Left cardiac atrium (tissue), 4 donors: ENCODE measurements at regions of chr5 and their contacts with region 1.

Region 1: DNA sequence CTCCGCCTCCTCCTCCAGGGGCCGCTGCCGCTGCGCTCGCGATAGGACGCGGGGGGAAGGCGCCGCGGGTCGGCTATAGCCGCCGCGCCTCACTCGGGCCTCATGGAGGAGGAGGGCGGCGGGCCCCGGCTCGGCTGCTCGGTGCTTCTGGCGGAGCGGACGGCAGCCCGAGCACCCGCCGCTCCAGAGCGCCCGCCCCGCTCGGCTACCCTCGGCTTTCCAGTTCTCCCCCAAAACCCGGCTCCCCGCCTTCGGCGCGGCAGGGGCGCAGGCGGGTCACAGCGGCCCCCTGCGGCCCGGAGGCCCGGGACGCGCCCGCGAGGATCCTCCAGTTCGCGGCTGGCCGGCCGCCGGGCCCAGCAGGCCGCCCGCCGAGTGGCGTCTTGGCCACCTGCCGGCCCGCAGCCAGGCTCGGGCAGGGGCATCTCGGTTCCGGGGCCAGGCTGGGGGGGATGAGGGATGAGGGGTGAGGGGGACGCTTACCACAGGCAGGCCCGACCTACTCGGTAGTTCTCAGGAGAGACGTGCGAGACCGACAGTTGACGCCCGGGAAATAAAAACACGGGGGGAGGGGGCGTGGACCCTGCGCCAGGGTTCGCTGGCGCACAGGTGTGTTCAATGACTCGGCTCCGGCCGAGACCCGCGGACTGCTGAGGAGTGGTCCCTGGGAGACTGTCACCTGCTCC is at the start of gene PAIP1:
- DNase-seq: peak; percentile 87
- ATAC-seq: peak; percentile 92 to 95
- total RNA-seq, gene PAIP1: 80.6 to 91.8 TPM

Region 2: DNA sequence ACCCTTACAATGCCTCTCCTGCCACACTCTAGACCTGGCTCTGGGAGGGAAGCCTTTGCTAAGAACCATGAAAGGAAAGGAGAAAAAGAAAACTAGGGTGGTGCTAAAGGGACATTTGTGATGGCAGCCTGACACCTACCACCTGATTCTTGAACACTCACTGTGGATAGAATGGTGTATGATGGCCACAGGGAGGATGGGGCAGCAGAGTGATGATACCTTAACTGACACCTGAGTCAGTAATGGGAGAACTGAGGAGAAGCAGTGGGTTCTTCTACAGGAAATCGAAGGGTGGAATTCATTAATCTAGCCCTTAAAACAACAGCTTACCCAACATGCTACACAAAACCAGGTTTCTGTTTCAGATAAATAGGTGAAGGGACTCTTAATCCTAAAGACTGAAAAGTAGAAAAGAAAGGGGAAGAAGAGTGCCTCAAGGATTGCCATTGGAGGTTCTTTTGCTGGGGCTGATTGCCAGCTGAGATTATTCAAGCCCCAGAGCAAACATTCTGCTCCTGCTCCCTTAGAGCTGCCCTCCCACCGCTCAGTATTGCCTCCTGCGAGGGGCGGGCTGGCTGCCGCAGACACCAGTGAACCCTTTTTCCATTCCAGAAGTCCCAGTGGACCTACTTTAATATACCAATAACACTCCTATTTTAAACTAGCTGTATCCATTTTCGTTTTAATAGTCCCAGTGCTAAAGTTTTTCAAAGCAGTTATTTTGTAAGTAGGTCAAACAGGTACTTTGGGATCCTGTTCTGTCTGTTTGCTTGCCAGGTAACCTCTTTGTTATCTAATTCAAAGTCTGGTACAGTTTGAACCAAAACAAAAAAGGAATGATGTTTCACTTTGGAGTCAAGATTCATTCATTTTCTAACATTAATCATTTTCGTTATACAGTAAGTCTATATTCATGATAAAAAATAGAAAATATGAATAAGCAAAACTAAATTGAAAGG is 282.6 kb before region 1 on chr5:
- intact Hi-C with region 1: no loop called
- DNase-seq: no peak
- ATAC-seq: no peak

Region 3: DNA sequence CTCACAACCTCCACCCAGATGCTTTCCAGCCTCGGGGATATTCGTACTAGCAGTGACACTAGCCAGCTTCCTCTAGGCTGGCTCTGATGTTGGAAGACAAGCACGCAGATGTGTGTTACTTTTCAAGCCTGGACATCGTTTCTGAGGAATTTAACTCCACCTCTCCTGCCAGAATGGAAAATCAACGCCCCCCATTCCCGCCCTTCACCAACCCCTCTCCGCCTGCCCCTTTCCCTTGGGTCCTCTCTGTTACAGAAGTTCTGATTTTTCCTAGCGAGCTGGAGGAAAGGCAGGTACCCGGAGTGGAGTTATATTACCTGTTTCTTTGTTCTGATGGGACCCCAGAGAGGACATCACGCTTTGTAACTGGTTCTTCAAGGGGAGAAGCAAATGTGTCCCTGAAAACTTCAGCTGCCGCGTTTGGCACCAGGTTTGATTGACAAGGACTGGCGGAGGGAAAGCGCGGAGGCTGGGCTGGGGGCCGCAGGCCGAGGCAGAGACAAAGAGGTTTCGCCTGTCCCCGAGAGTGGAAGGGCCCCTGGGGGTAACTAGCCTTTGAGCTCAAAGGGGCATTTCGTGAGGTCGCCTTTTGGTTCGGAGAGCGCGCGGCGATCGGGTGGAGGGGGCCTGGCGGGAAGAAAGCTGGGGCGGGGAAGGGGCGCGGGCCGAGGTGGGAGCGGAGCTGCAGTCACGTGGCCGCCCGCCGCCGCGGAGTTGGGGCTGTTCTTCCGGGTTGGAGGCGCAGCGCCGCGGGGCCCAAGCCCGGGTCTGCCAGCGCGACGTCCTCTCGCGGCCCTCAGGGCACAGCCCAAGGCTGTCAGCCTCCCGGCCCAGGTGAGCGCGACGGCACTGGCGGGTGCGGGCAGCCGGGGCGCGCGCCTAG is 45.7 kb after region 1 on chr5 and contains the start of gene NNT:
- intact Hi-C with region 1: loop called in 1 of 2 experiments (anchors 5 kb)
- DNase-seq: peak; percentile 85
- ATAC-seq: peak; percentile 91 to 93
- total RNA-seq, gene NNT: 323 to 422 TPM

Region 4: GRCh38 chr5:44199408-44199807 is 642.4 kb after region 1 on chr5:
- intact Hi-C with region 1: no loop called
- DNase-seq: no peak
- ATAC-seq: no peak